ENCODE measurements at regions of chr9 and their contacts with region 1.

Region 1: GRCh38 chr9:86783884-86784283 is 163.4 kb downstream of the GAS1 start:
- DNase-seq: peak; percentile 64
- H3K4me3 ChIP-seq: no peak overlapping the region
- H3K27ac ChIP-seq: no peak overlapping the region
- H3K4me1 ChIP-seq: peaks cover 6% of the 10 kb centered on the region; the same call in 1 of the 2 replicates
- H3K27me3 ChIP-seq: no peaks in the 10 kb centered on the region

Region 2: GRCh38 chr9:86732514-86733171 is 51.2 kb before region 1 on chr9:
- in situ Hi-C with region 1: loop called (anchors 5 kb)
- DNase-seq: peak; percentile 94
- H3K4me3 ChIP-seq: peak overlapping the region; percentile 25; the same call in 1 of the 2 replicates
- H3K27ac ChIP-seq: peak overlapping the region; percentile 79
- H3K4me1 ChIP-seq: peaks cover 51% of the 10 kb centered on the region
- H3K27me3 ChIP-seq: no peaks in the 10 kb centered on the region

Region 3: GRCh38 chr9:86836797-86837196 is 52.9 kb after region 1 on chr9:
- in situ Hi-C with region 1: no loop called
- DNase-seq: no peak
- H3K4me3 ChIP-seq: no peak overlapping the region
- H3K27ac ChIP-seq: no peak overlapping the region
- H3K4me1 ChIP-seq: no peaks in the 10 kb centered on the region
- H3K27me3 ChIP-seq: no peaks in the 10 kb centered on the region

Measured in GM23248 (cell line).